ENCODE measurements at regions of chr17 and their contacts with region 1.

Region 1: GRCh38 chr17:44417553-44417952 is 28.1 kb upstream of the ITGA2B start:
- DNase-seq: peak; percentile 41
- ATAC-seq: no peak
- H3K4me3 ChIP-seq: no peak overlapping the region
- H3K27ac ChIP-seq: no peak overlapping the region
- H3K4me1 ChIP-seq: no peaks in the 10 kb centered on the region
- H3K27me3 ChIP-seq: no peaks in the 10 kb centered on the region
- CTCF ChIP-seq: no peak

Region 2: DNA sequence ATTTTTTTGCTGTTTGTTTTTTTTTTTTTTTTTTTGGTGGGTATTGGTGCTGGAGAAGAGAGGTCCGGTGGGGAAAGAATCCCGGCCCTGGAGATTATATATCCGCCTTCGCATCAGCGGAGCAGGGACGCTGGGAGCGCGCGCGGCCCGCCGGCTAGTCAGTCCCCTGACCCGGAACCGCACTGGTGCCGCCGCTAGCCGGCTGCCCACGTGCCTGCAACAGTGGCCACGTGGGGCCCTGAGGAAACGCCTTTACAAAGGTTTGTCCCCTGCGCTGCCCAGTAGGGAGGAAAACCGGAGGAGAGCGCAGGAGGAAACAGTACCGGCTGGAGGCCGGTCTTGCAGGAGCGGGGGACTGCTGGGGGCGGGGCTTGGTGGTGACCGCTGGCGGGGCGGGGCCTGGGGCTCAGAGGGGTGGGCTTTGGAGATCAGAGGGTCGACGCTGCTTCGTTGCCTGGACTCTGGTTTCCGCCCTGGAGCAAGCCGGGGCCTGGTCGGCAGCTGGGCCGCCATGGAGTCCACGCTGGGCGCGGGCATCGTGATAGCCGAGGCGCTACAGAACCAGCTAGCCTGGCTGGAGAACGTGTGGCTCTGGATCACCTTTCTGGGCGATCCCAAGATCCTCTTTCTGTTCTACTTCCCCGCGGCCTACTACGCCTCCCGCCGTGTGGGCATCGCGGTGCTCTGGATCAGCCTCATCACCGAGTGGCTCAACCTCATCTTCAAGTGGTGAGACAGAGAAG is 346.9 kb before region 1 on chr17 and contains the start of gene G6PC3:
- CTCF ChIA-PET with region 1: no interaction called
- POLR2A ChIA-PET with region 1: interaction called, 10 read pairs
- in situ Hi-C with region 1: no loop called
- intact Hi-C with region 1: no loop called
- DNase-seq: no peak
- ATAC-seq: peak; percentile 91
- H3K4me3 ChIP-seq: peak within 1 kb of the TSS; percentile 71 to 87
- H3K27ac ChIP-seq: peak within 1 kb of the TSS; percentile 95
- H3K4me1 ChIP-seq: peaks cover 20% of the 10 kb centered on the region
- H3K27me3 ChIP-seq: no peaks in the 10 kb centered on the region
- CTCF ChIP-seq: no peak
- total RNA-seq, gene G6PC3: 42.7 TPM